ENCODE measurements at regions of chr17 and their contacts with region 1.

Region 1: DNA sequence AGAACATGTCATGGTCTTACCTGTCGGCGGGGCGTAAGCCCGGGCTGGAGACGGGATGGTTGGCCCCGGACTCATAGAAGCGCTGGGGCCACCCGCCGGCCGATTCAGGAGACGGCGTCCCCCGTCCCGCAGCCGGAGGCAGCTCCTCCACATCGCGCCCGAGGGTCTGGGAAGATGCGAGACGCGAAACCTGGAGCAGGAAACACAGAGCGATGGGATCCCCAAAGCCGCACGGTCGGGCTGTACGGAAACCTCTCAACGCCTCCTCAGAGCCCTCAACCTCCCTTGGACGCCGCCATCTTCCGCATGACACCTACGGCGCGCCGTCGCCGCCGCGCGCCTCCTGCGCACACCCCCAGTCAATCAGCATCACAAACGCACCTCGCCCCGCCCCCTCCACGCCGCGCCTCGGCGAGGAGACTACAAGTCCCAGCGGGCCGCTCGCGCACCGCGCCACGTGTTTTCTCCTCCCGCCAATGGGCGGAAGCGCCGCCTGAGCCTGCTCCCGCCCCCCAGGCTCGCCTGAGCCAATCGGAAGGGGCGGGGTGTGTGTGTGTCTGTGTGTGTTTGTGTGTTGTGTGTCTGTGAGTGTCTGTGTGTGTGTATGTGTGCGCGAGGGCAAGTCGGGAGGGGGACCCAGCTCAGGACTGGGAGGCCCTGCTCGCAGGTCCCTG is at the starts of genes ATPAF2 and GID4:
- DNase-seq: peak; percentile 98
- CTCF ChIP-seq: no peak

Region 2: GRCh38 chr17:17888821-17889220 is 150.2 kb before region 1 on chr17:
- in situ Hi-C with region 1: loop called (anchors 10 kb)
- DNase-seq: no peak
- CTCF ChIP-seq: no peak

Region 3: GRCh38 chr17:17935321-17936271 is 103.4 kb before region 1 on chr17:
- in situ Hi-C with region 1: no loop called
- DNase-seq: no peak
- CTCF ChIP-seq: no peak

Measured in GM13977 (cell line).